Activated CD8-positive, alpha-beta T cell treated with anti-CD3 and anti-CD28 coated beads for 36 hours (primary cell): ENCODE measurements at regions of chr2 and their contacts with region 1.

Region 1: GRCh38 chr2:218079943-218080913 is 11.2 kb downstream of the RUFY4 start:
- DNase-seq: no peak
- ATAC-seq: no peak
- H3K4me3 Mint-ChIP-seq: no peak overlapping the region
- H3K27ac Mint-ChIP-seq: no peak overlapping the region
- H3K4me1 Mint-ChIP-seq: no peaks in the 10 kb centered on the region
- H3K27me3 Mint-ChIP-seq: peaks cover 5% of the 10 kb centered on the region
- CTCF ChIP-seq: no peak

Region 2: GRCh38 chr2:217729421-217730053 is 350.7 kb before region 1 on chr2:
- CTCF ChIA-PET with region 1: no interaction called
- POLR2A ChIA-PET with region 1: no interaction called
- intact Hi-C with region 1: no loop called
- DNase-seq: no peak
- ATAC-seq: no peak
- H3K4me3 Mint-ChIP-seq: no peak overlapping the region
- H3K27ac Mint-ChIP-seq: no peak overlapping the region
- H3K4me1 Mint-ChIP-seq: peaks cover 25% of the 10 kb centered on the region
- H3K27me3 Mint-ChIP-seq: no peaks in the 10 kb centered on the region
- CTCF ChIP-seq: no peak

Region 3: GRCh38 chr2:217872319-217872718 is 207.9 kb before region 1 on chr2:
- CTCF ChIA-PET with region 1: no interaction called
- POLR2A ChIA-PET with region 1: no interaction called
- intact Hi-C with region 1: no loop called
- DNase-seq: no peak
- ATAC-seq: no peak
- H3K4me3 Mint-ChIP-seq: no peak overlapping the region
- H3K27ac Mint-ChIP-seq: no peak overlapping the region
- H3K4me1 Mint-ChIP-seq: no peaks in the 10 kb centered on the region
- H3K27me3 Mint-ChIP-seq: no peaks in the 10 kb centered on the region
- CTCF ChIP-seq: no peak

Region 4: DNA sequence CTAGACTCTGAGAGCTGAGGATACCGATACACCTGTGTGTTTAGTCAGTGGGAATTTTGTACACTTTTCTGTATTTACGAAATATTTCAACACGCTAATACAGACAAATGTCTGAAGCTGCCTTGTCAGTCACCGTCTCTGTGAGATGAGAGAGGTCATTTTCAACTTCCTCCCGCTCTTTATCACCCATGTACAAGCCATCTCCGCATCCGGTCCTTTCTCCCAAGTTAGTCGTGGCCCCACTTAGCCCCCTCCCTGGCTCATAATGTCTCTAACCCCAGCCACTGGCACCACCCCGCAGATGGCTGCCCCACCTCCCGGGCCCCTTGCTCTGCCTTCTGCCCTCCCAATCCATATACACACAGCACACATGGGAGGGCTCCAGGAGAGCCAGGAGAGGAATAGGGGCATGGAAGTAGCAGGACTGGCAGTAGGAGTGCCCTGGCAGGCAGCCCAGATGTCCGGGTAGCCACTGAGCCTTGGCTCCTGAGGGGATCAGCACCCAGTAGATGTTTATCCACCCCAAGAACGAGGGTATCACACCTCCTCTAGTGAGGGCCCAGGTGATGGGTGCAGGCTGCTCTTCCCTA is 13.2 kb before region 1 on chr2:
- CTCF ChIA-PET with region 1: interaction called, 13 read pairs
- POLR2A ChIA-PET with region 1: interaction called, 3 read pairs
- intact Hi-C with region 1: no loop called
- DNase-seq: no peak
- ATAC-seq: no peak
- H3K4me3 Mint-ChIP-seq: no peak overlapping the region
- H3K27ac Mint-ChIP-seq: no peak overlapping the region
- H3K4me1 Mint-ChIP-seq: peaks cover 7% of the 10 kb centered on the region
- H3K27me3 Mint-ChIP-seq: peaks cover 12% of the 10 kb centered on the region
- CTCF ChIP-seq: no peak